ENCODE measurements at regions of chr19 and their contacts with region 1.

Region 1: GRCh38 chr19:48738557-48739399 is 1.6 kb downstream of the RASIP1 start:
- DNase-seq: peak; percentile 95
- ATAC-seq: peak; percentile 92 to 93

Region 2: GRCh38 chr19:48674921-48675824 is 63.6 kb before region 1 on chr19:
- intact Hi-C with region 1: loop called in 1 of 2 experiments (anchors 10 kb)
- DNase-seq: peak; percentile 86
- ATAC-seq: peak; percentile 82 to 84

Measured in left cardiac atrium (tissue), 4 donors.